H1 (cell line): ENCODE measurements at regions of chr1 and their contacts with region 1.

Region 1: DNA sequence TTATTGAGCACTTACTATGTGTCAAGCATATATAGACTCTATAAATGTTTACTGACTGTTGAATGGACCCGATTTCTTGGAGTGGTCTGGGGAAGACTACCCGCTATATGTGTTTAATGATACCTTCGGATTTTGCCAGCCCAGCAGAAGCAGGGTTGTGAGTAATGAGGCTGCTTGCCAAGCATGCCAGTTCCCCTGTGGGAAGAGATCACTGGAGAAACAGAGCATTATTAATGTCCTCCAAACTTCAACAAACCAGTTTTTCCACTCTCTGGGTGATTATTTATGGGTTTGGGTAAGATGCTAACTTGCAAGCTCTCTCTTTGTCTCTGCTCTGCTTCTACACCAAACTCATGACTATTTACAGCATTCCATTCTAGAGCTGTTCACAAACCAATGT is 25.1 kb upstream of the PHGDH start:
- DNase-seq: no peak
- H3K4me3 ChIP-seq: peak overlapping the region in 1 of 4 experiments; percentile 32; a peak in 1 of 8 replicates
- H3K27ac ChIP-seq: no peak overlapping the region
- H3K4me1 ChIP-seq: peaks cover 0 to 16% (median 10%) of the 10 kb centered on the region in 4 experiments; a peak in 6 of 7 replicates
- H3K27me3 ChIP-seq: no peaks in the 10 kb centered on the region
- CTCF ChIP-seq: no peak
- EP300 ChIP-seq: no peak
- POLR2A ChIP-seq: no peak
- RAD21 ChIP-seq: no peak

Region 2: DNA sequence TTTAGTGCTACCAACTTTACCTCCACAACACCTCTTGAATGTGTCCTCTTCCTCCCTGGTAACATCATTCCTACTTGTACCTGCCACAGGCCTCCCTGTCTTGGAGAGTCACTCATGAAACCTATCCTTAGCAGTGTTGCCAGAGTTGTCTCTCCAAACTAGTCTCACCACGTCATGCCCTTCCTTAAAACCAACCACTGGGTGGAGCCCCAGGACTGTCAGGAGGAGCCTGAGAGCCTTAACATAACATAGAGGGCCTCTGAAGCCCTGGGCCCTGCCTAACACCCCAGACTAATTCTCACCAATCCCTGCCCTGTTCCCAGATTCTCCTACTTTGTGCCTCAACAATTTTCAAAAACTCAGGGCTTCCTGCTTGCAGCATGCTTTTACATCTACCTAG is 103.8 kb before region 1 on chr1:
- CTCF ChIA-PET with region 1: no interaction called
- POLR2A ChIA-PET with region 1: no interaction called
- DNase-seq: peak; percentile 15 to 75
- H3K4me3 ChIP-seq: no peak overlapping the region
- H3K27ac ChIP-seq: no peak overlapping the region
- H3K4me1 ChIP-seq: peaks cover 0 to 3% (median 1%) of the 10 kb centered on the region in 4 experiments; a peak in 1 of 7 replicates
- H3K27me3 ChIP-seq: no peaks in the 10 kb centered on the region
- CTCF ChIP-seq: peak; percentile 54 to 82 (median 80)
- EP300 ChIP-seq: no peak
- POLR2A ChIP-seq: no peak
- RAD21 ChIP-seq: peak; percentile 87 to 91

Region 3: DNA sequence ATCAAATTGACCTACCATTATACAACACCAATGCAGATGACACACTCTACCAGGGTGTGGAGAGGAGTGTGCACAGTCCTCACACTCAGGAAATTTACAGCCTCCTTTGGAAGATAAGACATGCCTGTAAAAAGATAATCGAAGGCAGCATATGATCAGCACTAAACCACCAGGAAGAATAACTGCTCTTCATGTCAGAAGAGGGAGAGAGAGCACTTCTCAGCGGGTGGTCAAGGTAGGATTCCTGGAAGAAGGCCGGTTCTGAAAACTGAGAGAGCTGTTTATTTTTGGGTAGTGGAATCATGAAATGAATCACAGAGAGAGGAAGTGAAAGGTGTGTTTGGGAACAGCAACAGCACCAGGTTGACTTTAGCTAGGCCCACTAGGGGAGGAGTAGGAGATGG is 24.6 kb before region 1 on chr1:
- CTCF ChIA-PET with region 1: interaction called, 141 read pairs
- POLR2A ChIA-PET with region 1: interaction called, 5 read pairs
- DNase-seq: no peak
- H3K4me3 ChIP-seq: no peak overlapping the region
- H3K27ac ChIP-seq: no peak overlapping the region
- H3K4me1 ChIP-seq: peaks cover 0 to 5% (median 1%) of the 10 kb centered on the region in 4 experiments; a peak in 2 of 7 replicates
- H3K27me3 ChIP-seq: no peaks in the 10 kb centered on the region
- CTCF ChIP-seq: no peak
- EP300 ChIP-seq: no peak
- POLR2A ChIP-seq: no peak
- RAD21 ChIP-seq: no peak

Region 4: GRCh38 chr1:119702384-119702783 is 15.7 kb after region 1 on chr1:
- CTCF ChIA-PET with region 1: interaction called, 8 read pairs
- POLR2A ChIA-PET with region 1: interaction called, 132 read pairs
- DNase-seq: no peak
- H3K4me3 ChIP-seq: no peak overlapping the region
- H3K27ac ChIP-seq: no peak overlapping the region
- H3K4me1 ChIP-seq: 0 out of 7 replicates have a peak, but pooled peaks cover 0 to 2% (median 0%) of the 10 kb centered on the region in 4 experiments
- H3K27me3 ChIP-seq: no peaks in the 10 kb centered on the region
- CTCF ChIP-seq: no peak
- EP300 ChIP-seq: no peak
- POLR2A ChIP-seq: no peak
- RAD21 ChIP-seq: no peak